Activated B cell treated with CpG ODN at 0.5 μM for 24 hours (primary cell): ENCODE measurements at regions of chr10 and their contacts with region 1.

Region 1: DNA sequence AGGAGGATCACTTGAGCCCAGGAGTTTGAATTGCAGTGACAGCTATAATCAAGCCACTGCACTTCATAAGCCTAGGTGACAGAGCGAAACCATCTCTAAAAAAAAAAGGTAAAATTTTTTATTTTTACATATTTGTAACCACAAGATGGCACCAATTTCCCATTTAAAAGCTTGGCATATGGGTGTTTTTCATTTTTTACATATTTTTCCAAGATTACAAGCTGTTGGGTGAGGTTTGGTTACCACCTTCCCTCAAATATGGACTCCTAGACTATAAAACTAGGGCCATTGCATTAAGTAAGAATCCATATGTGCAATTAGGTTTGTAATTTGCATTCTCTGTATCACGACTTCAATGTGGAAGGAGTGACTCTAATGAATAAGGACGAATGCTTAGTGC is 129.3 kb upstream of the ACBD5 start:
- DNase-seq: no peak
- ATAC-seq: no peak
- H3K4me3 Mint-ChIP-seq: no peak overlapping the region
- H3K27ac Mint-ChIP-seq: no peak overlapping the region
- H3K4me1 Mint-ChIP-seq: peaks cover 14% of the 10 kb centered on the region
- H3K27me3 Mint-ChIP-seq: peaks cover 2% of the 10 kb centered on the region
- CTCF ChIP-seq: no peak

Region 2: GRCh38 chr10:26642896-26643653 is 726.8 kb before region 1 on chr10:
- CTCF ChIA-PET with region 1: no interaction called
- POLR2A ChIA-PET with region 1: no interaction called
- intact Hi-C with region 1: loop called (anchors 5 kb)
- DNase-seq: no peak
- ATAC-seq: no peak
- H3K4me3 Mint-ChIP-seq: no peak overlapping the region
- H3K27ac Mint-ChIP-seq: no peak overlapping the region
- H3K4me1 Mint-ChIP-seq: no peaks in the 10 kb centered on the region
- H3K27me3 Mint-ChIP-seq: no peaks in the 10 kb centered on the region
- CTCF ChIP-seq: no peak

Region 3: DNA sequence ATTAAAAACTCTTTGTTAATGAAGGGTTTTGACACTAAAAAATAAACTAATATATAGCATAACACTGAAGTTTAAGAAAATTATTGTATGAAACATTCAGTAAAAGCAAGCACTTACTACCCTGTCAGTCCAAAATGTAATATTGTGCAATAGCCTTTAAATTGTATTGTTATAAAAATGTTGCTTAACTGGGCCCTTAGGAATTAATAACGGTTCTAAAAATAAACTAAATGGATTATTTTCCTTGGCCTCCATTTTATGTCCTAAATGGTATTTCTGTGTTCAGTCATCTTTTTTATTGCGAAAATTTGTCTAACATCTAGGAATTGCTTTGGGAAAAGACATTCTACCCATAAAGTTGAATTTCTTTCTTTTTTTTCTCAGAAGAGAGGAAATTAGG is 460.1 kb before region 1 on chr10:
- CTCF ChIA-PET with region 1: no interaction called
- POLR2A ChIA-PET with region 1: no interaction called
- intact Hi-C with region 1: no loop called
- DNase-seq: no peak
- ATAC-seq: no peak
- H3K4me3 Mint-ChIP-seq: no peak overlapping the region
- H3K27ac Mint-ChIP-seq: no peak overlapping the region
- H3K4me1 Mint-ChIP-seq: peaks cover 10% of the 10 kb centered on the region
- H3K27me3 Mint-ChIP-seq: no peaks in the 10 kb centered on the region
- CTCF ChIP-seq: no peak

Region 4: GRCh38 chr10:27661514-27662286 is 291.8 kb after region 1 on chr10:
- CTCF ChIA-PET with region 1: no interaction called
- POLR2A ChIA-PET with region 1: no interaction called
- intact Hi-C with region 1: loop called (anchors 1 kb)
- DNase-seq: no peak
- ATAC-seq: no peak
- H3K4me3 Mint-ChIP-seq: no peak overlapping the region
- H3K27ac Mint-ChIP-seq: no peak overlapping the region
- H3K4me1 Mint-ChIP-seq: no peaks in the 10 kb centered on the region
- H3K27me3 Mint-ChIP-seq: peaks cover 15% of the 10 kb centered on the region
- CTCF ChIP-seq: no peak

Region 5: GRCh38 chr10:28179006-28179742 is 809.3 kb after region 1 on chr10:
- CTCF ChIA-PET with region 1: interaction called, 3 read pairs
- POLR2A ChIA-PET with region 1: no interaction called
- intact Hi-C with region 1: loop called (anchors 1 kb)
- DNase-seq: no peak
- ATAC-seq: peak; percentile 64
- H3K4me3 Mint-ChIP-seq: no peak overlapping the region
- H3K27ac Mint-ChIP-seq: no peak overlapping the region
- H3K4me1 Mint-ChIP-seq: peaks cover 15% of the 10 kb centered on the region
- H3K27me3 Mint-ChIP-seq: no peaks in the 10 kb centered on the region
- CTCF ChIP-seq: peak; percentile 88

Region 6: DNA sequence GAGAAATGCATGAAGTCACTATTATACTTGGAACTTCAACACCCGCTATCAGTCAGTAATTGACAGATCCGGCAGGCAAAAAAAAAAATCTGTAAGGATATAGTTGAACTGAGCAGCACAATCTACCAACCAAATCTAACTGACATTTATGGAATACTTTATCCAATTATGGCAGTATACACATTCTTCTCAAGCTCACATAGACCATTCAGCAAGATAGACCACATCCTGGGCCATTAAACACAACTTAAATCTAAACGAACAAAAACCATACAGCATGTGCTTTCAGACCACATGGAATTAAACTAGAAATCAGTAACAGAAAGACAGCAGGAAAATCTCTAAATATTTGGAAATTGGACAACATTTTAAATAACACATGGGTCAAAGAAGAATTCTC is 820.3 kb after region 1 on chr10:
- CTCF ChIA-PET with region 1: no interaction called
- POLR2A ChIA-PET with region 1: no interaction called
- intact Hi-C with region 1: no loop called
- DNase-seq: no peak
- ATAC-seq: no peak
- H3K4me3 Mint-ChIP-seq: no peak overlapping the region
- H3K27ac Mint-ChIP-seq: no peak overlapping the region
- H3K4me1 Mint-ChIP-seq: no peaks in the 10 kb centered on the region
- H3K27me3 Mint-ChIP-seq: peaks cover 4% of the 10 kb centered on the region
- CTCF ChIP-seq: no peak

Region 7: DNA sequence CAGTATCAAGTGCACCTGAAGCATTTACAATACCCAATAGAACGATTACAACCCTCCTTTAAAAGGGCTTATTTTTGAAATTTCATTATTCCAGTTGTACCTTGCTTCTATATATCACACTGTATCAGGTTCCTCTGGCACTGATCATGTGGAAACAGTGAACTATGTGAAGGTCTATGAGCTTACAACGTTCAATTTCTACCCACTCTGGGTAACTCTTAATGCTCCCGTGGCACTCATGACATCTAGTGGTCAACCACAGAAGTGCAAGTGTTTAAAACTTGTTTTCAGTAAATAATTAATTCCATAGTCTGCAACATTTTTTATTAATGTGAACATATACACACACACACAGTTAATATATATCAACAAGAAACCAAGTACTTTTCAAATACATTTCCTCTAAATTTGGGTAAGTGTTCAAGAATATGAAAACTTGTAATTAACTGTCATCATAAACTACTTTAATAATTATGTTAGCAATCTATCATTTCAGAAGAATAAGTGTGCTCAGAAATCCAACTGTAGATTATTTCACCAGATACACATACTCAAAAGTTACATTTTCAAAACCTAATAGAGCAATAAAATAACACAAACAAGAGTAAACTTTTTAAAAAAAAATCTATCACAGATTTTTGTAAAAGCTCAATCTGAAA is 872.0 kb after region 1 on chr10:
- CTCF ChIA-PET with region 1: interaction called, 12 read pairs
- POLR2A ChIA-PET with region 1: no interaction called
- intact Hi-C with region 1: loop called (anchors 2 kb)
- DNase-seq: no peak
- ATAC-seq: peak; percentile 72
- H3K4me3 Mint-ChIP-seq: no peak overlapping the region
- H3K27ac Mint-ChIP-seq: no peak overlapping the region
- H3K4me1 Mint-ChIP-seq: no peaks in the 10 kb centered on the region
- H3K27me3 Mint-ChIP-seq: peaks cover 13% of the 10 kb centered on the region
- CTCF ChIP-seq: no peak